Ovary (tissue), 10 donors: ENCODE measurements at regions of chr16 and their contacts with region 1.

Region 1: DNA sequence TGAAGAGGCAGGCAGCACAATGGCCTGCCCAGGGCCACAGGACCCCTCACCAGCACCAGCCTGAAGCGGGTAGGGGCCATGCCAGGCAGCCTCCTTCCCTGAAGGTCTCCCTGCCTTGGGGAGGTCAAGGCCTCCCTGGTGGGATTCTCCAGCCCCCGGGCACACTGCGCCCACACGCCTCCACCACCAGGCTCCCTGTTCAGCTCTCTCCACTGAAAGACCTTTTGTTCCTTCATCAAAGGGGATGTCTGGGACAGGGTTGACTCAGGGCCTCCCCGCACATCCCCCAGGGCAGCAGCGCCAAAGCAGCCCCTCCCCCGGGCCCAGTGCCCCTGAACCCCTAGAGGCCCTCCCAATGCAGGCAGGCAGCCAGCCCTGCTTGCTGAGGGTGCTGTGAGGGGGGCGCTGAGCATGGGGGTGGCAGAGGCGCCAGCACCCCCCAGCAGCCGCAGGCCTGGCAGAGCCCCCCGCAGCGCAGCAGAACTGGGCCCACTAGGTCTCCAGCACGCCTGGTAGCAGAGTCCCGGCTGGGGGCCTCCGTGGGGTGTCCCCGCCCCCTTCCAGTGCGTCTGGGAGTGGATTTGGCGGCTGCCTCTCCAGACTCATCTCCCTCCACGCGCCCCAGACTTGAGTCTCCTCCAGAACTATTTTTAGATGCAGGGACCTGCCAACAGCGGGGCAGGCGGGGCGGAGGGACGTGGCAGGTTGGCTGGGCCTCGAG is 13.1 kb downstream of the BCAR1 start:
- DNase-seq: peak; percentile 90 to 94 (median 91)
- H3K4me3 ChIP-seq: no peak overlapping the region
- H3K27ac ChIP-seq: peak overlapping the region; percentile 59 to 79
- H3K4me1 ChIP-seq: peaks cover 15% of the 10 kb centered on the region
- H3K27me3 ChIP-seq: no peaks in the 10 kb centered on the region
- CTCF ChIP-seq: no peak
- EP300 ChIP-seq: no peak
- POLR2A ChIP-seq: no peak

Region 2: GRCh38 chr16:74973153-74973703 is 265.1 kb before region 1 on chr16:
- intact Hi-C with region 1: no loop called
- DNase-seq: no peak
- H3K4me3 ChIP-seq: no peak overlapping the region
- H3K27ac ChIP-seq: no peak overlapping the region
- H3K4me1 ChIP-seq: no peaks in the 10 kb centered on the region
- H3K27me3 ChIP-seq: no peaks in the 10 kb centered on the region
- CTCF ChIP-seq: no peak
- EP300 ChIP-seq: no peak
- POLR2A ChIP-seq: no peak

Region 3: GRCh38 chr16:75305364-75306098 is 67.2 kb after region 1 on chr16:
- intact Hi-C with region 1: loop called in 2 of 4 experiments (anchors 5 to 10 kb)
- DNase-seq: peak; percentile 58 to 86 (median 73)
- H3K4me3 ChIP-seq: no peak overlapping the region
- H3K27ac ChIP-seq: peak overlapping the region in 1 of 2 donors; percentile 73
- H3K4me1 ChIP-seq: peaks cover 2% of the 10 kb centered on the region
- H3K27me3 ChIP-seq: no peaks in the 10 kb centered on the region
- CTCF ChIP-seq: no peak
- EP300 ChIP-seq: peak; percentile 25
- POLR2A ChIP-seq: no peak

Region 4: DNA sequence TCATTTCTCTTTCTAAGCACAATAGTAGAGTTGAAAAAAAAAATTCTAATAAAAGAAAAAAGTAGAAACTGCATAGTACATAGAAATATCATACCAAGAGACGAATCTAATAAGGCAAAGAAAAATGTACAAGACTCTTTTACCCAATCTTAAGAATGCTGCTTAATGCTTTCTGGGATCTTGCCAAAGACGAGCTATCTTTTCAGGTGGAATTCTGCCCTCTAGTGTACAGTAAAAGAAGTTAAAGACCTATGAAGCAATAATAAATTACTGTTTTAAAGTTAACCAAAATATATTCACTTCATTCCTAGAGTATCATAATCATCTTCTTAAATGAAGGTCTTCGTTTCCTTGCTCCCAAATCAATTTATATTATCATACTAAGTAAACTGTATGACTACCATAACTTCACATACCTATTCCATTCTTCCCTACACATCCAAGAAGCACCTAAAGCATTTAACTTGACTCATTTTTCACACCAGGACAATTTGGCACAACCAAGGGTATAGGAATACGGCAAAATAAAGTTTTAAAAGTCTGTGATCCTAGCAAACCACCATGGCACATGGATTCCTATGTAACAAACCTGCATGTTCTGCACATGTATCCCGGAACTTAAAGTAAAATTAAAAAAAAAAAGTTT is 147.3 kb after region 1 on chr16:
- intact Hi-C with region 1: loop called (anchors 2 to 5 kb)
- DNase-seq: no peak
- H3K4me3 ChIP-seq: no peak overlapping the region
- H3K27ac ChIP-seq: no peak overlapping the region
- H3K4me1 ChIP-seq: no peaks in the 10 kb centered on the region
- H3K27me3 ChIP-seq: no peaks in the 10 kb centered on the region
- CTCF ChIP-seq: peak; percentile 48 to 88 (median 74)
- EP300 ChIP-seq: no peak
- POLR2A ChIP-seq: no peak

Region 5: DNA sequence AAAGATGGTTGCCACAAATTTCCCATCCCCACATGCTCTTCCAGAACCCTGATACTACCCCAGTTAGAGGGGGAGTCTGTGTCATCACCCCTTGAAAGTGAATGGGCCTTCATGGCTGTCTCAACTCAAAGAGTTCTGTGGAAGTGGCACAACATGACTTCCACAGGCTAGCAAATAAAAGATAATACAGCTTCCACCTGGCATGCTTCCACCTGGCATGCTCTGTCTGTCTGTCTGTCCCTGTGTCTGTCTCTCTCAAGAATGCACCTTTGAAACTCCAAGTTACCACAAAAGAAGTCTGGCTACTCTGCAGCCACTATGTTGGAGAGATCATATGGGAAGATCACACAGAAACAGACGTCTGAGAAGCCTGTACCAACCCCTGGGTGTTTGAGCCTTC is 160.0 kb after region 1 on chr16:
- intact Hi-C with region 1: loop called in 1 of 4 experiments (anchors 5 kb)
- DNase-seq: no peak
- H3K4me3 ChIP-seq: no peak overlapping the region
- H3K27ac ChIP-seq: no peak overlapping the region
- H3K4me1 ChIP-seq: no peaks in the 10 kb centered on the region
- H3K27me3 ChIP-seq: no peaks in the 10 kb centered on the region
- CTCF ChIP-seq: no peak
- EP300 ChIP-seq: no peak
- POLR2A ChIP-seq: no peak